ENCODE measurements at regions of chr14 and their contacts with region 1.

Region 1: DNA sequence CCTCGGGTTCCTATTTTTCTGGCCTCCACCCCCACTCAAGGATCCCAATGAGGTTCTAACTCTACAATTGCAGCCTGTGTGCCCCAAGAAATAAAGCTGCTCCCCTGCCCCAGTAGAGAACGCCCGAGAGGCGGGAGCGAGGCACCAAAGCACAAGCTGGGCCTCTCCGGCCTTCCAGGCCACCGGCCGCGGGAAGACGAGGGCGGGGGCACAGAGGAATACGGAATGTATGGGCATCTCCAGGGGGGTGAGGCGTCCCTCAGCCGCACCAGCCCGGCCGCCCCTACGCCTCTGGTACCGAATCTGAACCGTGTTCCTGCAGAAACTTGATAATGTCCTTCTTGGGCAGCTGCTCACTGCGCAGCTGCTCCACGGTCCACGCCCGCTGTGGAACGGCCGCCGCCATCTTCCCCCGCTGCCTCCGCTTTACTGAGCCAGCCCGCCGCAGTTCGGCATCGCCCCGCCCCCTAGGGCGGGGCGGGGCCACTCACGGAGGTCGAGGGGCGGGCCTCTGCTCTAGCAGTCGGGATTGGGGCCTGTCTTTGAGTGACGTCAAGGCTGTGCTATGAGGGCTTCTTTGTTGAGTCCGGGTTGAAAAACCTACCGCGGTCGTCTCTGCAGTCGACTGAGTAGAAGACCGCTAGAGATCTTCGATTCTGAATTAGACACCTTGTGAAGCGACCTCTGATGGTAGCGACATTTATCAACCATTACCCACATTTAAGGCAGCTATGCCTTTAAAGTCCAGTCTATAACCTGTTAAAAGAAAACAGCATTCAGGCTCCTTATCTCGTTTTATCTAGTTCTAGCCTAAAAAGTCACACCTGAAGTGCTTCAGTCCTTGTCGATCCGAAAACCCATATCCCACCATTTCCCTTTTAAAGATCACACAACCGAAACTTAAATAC is at the start of gene FKBP3:
- DNase-seq: peak; percentile 95 to 98
- H3K4me3 ChIP-seq: peak within 1 kb of the TSS; percentile 51
- H3K4me3 Mint-ChIP-seq: peak within 1 kb of the TSS; percentile 97
- H3K27ac Mint-ChIP-seq: peak within 1 kb of the TSS; percentile 95
- H3K4me1 ChIP-seq: peaks cover 8% of the 10 kb centered on the region; the same call in 1 of the 2 replicates
- H3K4me1 Mint-ChIP-seq: peaks cover 14% of the 10 kb centered on the region
- H3K27me3 ChIP-seq: no peaks in the 10 kb centered on the region
- H3K27me3 Mint-ChIP-seq: no peaks in the 10 kb centered on the region
- CTCF ChIP-seq: no peak
- total RNA-seq, gene FKBP3: 94.2 and 94.8 TPM in 2 replicates

Region 2: DNA sequence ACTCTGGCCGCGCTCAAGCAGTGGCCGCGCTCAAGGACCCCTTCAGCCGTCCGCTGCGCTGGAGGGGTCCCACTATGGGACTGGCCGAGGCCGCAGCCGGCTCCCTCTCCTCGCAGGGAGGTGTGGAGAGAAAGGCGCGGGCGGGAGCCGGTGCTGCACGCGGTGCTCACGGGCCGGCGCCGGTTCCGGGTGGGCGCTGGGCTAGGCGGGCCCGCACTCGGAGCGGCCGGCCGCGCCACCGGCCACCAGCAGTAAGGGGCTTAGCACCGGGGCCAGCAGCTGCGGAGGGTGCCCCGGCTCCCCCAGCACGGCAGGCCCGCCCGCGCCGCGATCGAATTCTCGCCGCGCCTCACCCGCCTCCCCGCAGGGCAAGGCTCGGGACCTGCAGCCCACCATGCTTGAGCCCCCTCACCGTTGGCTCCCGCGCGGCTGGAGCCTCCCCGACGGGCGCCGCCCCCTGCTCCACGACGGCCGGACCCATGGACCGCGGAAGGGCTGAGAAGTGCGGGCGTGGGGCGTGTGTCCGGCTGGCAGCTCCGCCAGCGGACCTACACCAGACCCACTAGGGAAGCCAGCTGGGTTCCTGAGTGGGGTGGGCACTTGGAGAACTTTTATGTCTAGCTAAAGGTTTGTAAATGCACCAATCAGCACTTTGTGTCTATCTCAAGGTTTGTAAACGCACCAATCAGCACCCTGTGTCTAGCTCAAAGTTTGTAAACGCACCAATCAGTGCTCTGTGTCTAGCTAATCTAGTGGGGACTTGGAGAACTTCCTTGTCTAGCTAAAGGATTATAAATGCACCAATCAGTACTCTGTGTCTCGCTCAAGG is 222.1 kb before region 1 on chr14:
- CTCF ChIA-PET with region 1: interaction called, 8 read pairs
- POLR2A ChIA-PET with region 1: no interaction called
- intact Hi-C with region 1: loop called (anchors 1 kb)
- DNase-seq: no peak
- H3K4me3 ChIP-seq: no peak overlapping the region
- H3K4me3 Mint-ChIP-seq: no peak overlapping the region
- H3K27ac Mint-ChIP-seq: no peak overlapping the region
- H3K4me1 ChIP-seq: no peaks in the 10 kb centered on the region
- H3K4me1 Mint-ChIP-seq: no peaks in the 10 kb centered on the region
- H3K27me3 ChIP-seq: no peaks in the 10 kb centered on the region
- H3K27me3 Mint-ChIP-seq: no peaks in the 10 kb centered on the region
- CTCF ChIP-seq: no peak

Region 3: GRCh38 chr14:45057881-45058364 is 76.4 kb before region 1 on chr14:
- CTCF ChIA-PET with region 1: no interaction called
- POLR2A ChIA-PET with region 1: no interaction called
- intact Hi-C with region 1: loop called (anchors 2 kb)
- DNase-seq: no peak
- H3K4me3 ChIP-seq: no peak overlapping the region
- H3K4me3 Mint-ChIP-seq: no peak overlapping the region
- H3K27ac Mint-ChIP-seq: no peak overlapping the region
- H3K4me1 ChIP-seq: no peaks in the 10 kb centered on the region
- H3K4me1 Mint-ChIP-seq: no peaks in the 10 kb centered on the region
- H3K27me3 ChIP-seq: no peaks in the 10 kb centered on the region
- H3K27me3 Mint-ChIP-seq: no peaks in the 10 kb centered on the region
- CTCF ChIP-seq: no peak

Region 4: DNA sequence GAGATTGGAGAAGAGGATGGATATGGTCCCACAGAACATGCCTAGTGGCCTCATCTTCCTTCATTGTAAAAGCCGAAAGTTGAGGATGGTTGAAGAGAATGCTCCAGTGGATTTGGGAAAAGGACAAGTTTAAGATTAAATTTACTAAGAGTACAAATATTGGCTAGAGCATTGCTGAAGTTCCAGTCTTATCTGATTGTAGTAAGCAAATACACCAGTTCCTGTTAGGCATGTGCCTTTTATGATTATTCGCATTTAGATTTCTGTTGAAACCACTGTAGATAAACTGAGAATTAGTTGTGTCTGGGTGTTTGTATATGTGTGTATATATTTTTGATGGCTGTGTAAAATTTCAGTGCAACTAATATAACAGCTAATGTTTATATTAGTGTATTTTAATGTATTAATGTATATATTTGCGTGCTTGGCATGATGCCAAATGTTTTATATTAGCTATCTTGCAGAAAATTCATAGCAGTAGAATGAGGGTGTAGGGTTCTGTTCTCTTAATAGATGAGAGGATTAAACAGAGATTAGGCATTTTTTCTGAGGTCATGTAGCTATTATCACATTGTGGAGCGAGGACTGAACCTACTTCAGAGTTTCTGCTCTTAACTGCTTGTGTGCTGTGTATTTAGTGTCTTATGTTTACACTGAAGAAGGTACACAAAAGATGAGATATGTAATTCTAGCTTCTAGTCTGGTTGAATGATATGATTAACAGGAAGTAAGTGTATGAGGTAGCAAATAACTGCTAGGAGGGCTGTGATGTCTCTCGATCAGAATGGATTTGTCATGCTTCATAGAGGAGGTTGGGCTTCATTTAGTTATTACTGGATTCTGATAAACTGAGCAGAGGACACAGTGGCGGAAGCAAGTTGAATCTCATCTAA is 21.2 kb before region 1 on chr14:
- CTCF ChIA-PET with region 1: no interaction called
- POLR2A ChIA-PET with region 1: interaction called, 3 read pairs
- intact Hi-C with region 1: loop called (anchors 1 kb)
- DNase-seq: peak in 1 of 2 experiments; percentile 17
- H3K4me3 ChIP-seq: no peak overlapping the region
- H3K4me3 Mint-ChIP-seq: peak overlapping the region; percentile 59
- H3K27ac Mint-ChIP-seq: peak overlapping the region; percentile 43
- H3K4me1 ChIP-seq: peaks cover 27% of the 10 kb centered on the region
- H3K4me1 Mint-ChIP-seq: peaks cover 17% of the 10 kb centered on the region
- H3K27me3 ChIP-seq: no peaks in the 10 kb centered on the region
- H3K27me3 Mint-ChIP-seq: no peaks in the 10 kb centered on the region
- CTCF ChIP-seq: no peak

Region 5: DNA sequence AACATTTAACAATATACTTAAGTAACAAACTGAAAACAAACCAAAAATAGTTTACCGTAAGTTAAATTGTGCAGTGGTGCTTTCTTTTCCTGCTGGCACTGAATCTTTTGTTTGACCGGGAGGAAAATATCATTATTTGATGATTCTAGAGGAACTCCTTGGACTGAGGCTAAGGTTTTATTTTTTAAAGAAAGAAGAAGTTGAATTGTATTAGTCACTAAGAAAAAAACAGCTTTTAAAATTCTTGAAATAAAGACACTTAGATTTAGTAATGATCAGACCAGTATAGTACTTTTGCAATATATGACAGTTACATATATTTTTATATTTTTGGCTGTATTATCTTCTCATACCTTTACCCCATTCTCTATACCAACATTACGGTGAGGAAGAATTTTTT is 108.4 kb after region 1 on chr14:
- CTCF ChIA-PET with region 1: no interaction called
- POLR2A ChIA-PET with region 1: no interaction called
- intact Hi-C with region 1: no loop called
- DNase-seq: no peak
- H3K4me3 ChIP-seq: no peak overlapping the region
- H3K4me3 Mint-ChIP-seq: no peak overlapping the region
- H3K27ac Mint-ChIP-seq: no peak overlapping the region
- H3K4me1 ChIP-seq: peaks cover 3% of the 10 kb centered on the region; the same call in 1 of the 2 replicates
- H3K4me1 Mint-ChIP-seq: peaks cover 7% of the 10 kb centered on the region
- H3K27me3 ChIP-seq: no peaks in the 10 kb centered on the region
- H3K27me3 Mint-ChIP-seq: no peaks in the 10 kb centered on the region
- CTCF ChIP-seq: no peak

Region 6: GRCh38 chr14:45253068-45253753 is 118.9 kb after region 1 on chr14 and contains the start of gene MIS18BP1:
- CTCF ChIA-PET with region 1: interaction called, 3 read pairs
- POLR2A ChIA-PET with region 1: interaction called, 3 read pairs
- intact Hi-C with region 1: loop called (anchors 1 kb)
- DNase-seq: peak; percentile 97
- H3K4me3 ChIP-seq: peak within 1 kb of the TSS; percentile 77
- H3K4me3 Mint-ChIP-seq: peak within 1 kb of the TSS; percentile 86
- H3K27ac Mint-ChIP-seq: peak within 1 kb of the TSS; percentile 96
- H3K4me1 ChIP-seq: no peaks in the 10 kb centered on the region
- H3K4me1 Mint-ChIP-seq: no peaks in the 10 kb centered on the region
- H3K27me3 ChIP-seq: no peaks in the 10 kb centered on the region
- H3K27me3 Mint-ChIP-seq: no peaks in the 10 kb centered on the region
- CTCF ChIP-seq: peak; percentile 49 to 82
- total RNA-seq, gene MIS18BP1: 31.4 and 38.4 TPM in 2 replicates

Region 7: DNA sequence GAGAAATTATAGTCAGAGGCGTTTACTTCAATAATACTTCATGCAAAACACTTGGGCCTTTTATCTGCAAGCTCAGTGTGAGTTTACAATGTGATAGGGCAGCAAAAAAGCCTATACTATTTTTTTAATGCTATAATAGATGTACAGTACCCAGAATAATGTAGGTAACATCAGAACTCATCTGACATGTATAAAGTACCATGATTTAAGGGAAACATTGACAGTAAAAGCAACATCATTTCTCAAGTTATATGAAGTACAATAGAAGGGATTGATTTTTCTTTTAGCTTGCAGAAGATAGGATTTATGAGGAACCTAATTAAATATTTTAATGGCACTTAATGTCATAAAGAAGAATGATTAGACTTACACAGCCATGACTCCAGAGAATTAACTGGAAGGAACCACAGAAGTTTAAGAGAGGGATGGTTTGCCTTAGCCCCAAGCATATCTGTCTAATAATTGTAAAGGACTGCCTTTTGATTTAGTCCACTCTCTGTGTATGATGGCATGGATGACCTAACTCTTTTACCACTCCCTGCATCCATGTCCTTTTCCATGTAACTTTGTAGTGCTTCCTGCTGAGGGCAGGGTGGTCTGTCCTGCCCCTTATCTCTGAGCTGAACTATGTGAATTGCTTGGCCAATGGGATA is 174.6 kb after region 1 on chr14:
- CTCF ChIA-PET with region 1: no interaction called
- POLR2A ChIA-PET with region 1: no interaction called
- intact Hi-C with region 1: no loop called
- DNase-seq: no peak
- H3K4me3 ChIP-seq: no peak overlapping the region
- H3K4me3 Mint-ChIP-seq: no peak overlapping the region
- H3K27ac Mint-ChIP-seq: no peak overlapping the region
- H3K4me1 ChIP-seq: no peaks in the 10 kb centered on the region
- H3K4me1 Mint-ChIP-seq: no peaks in the 10 kb centered on the region
- H3K27me3 ChIP-seq: 0 out of 2 replicates have a peak, but pooled peaks cover 1% of the 10 kb centered on the region
- H3K27me3 Mint-ChIP-seq: peaks cover 3% of the 10 kb centered on the region
- CTCF ChIP-seq: no peak

Measured in Caco-2 (cell line).